H1 (cell line): ENCODE measurements at regions of chr16 and their contacts with region 1.

Region 1: DNA sequence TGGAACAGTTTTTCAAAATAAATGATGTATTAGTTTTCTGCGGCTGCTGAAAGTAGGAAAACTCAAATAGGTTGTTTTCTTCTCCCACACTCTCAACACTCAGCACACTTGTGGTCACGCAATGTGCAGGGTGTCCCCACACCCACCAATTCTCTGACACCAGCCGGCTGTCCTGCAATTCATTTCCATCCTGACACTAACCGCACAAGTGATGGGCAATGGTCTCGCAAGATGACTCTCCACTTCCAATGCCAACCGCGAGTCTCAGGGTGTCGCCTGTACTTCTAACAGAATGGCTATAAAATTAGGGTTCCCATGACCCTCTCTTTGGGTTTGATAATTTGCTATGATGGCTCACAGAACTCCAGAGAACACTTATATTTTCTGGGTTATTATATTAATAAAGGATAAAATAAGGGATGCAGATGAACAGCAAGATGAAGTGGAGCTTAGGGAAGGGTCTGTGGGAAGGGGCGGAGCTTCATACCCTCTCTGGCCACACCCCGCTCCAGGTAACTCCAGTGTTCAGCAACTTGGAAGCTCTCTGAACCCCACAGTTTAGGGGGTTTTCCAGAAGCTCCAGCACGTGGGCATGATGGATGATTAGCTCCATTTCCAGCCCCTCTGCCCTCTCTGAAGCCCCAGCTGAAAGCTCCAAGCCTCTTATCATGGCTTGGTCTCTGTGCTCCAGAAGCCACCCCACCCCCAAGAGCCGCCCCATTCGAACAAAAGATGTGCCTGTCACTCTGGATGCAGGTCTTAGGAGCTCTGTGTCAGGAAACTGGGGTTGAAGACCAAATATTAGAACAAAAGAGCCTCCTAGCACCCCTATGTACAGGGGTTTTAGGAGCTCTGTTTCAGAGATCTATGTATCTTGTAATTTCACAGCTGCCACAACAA is 19.8 kb downstream of the TAF1C start:
- DNase-seq: no peak
- H3K4me3 ChIP-seq: no peak overlapping the region
- H3K27ac ChIP-seq: no peak overlapping the region
- H3K4me1 ChIP-seq: no peaks in the 10 kb centered on the region
- H3K27me3 ChIP-seq: no peaks in the 10 kb centered on the region; a peak in 1 of 7 replicates
- CTCF ChIP-seq: no peak
- EP300 ChIP-seq: no peak
- POLR2A ChIP-seq: no peak
- RAD21 ChIP-seq: no peak

Region 2: DNA sequence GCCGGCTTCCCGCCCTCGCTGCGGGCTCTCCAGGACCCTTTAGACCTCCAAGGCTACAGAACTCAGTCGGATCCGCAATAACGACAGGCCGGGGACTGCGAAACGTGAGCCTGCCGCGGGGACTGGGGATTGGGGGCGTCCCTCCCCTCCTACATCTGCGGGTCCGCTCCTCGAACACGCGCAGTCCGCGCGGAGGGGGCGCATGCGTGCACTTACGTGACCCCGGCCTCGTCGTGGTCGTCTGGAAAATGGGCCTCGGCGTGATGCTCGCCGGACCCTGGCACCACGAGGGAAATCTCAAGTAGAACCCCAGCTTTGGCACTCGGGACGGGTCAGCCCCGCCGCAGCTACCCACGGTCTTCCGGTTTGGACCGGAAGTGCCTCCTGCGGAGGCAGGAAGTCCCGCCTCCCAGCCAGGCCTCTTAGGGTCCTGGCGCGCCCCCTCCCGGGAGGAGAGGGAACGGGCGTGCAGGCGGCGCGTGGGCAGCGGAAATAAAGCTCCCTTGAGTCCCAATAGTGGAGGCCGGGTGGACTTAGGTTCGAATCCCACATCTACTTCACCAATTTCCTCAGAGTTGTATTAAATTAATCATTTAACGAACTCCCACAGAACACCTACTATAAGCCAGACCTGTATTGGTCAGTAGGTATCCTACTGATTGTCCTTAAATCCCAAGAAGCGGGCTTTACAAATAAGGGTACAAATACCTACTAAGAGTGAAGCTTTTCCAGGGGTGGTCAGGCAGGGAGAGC is 19.8 kb after region 1 on chr16 and contains the start of gene TAF1C:
- CTCF ChIA-PET with region 1: interaction called, 11 read pairs
- POLR2A ChIA-PET with region 1: interaction called, 6 read pairs
- DNase-seq: peak; percentile 85 to 93
- H3K4me3 ChIP-seq: peak within 1 kb of the TSS; percentile 81 to 96 (median 94)
- H3K27ac ChIP-seq: peak within 1 kb of the TSS; percentile 29; the same call in 1 of the 2 replicates
- H3K4me1 ChIP-seq: peaks cover 0 to 2% (median 0%) of the 10 kb centered on the region in 4 experiments; a peak in 3 of 7 replicates
- H3K27me3 ChIP-seq: no peaks in the 10 kb centered on the region
- CTCF ChIP-seq: peak; percentile 84 to 94 (median 89)
- EP300 ChIP-seq: 0 out of 3 replicates have a peak, but pooled peaks of 1 of the 2 experiments have one; percentile 54
- POLR2A ChIP-seq: peak in 1 of 2 experiments; percentile 82; a peak in 2 of 3 replicates
- RAD21 ChIP-seq: peak; percentile 60 to 78
- total RNA-seq, gene TAF1C: 63.8 and 68.0 TPM in 2 replicates